ENCODE measurements at regions of chr6 and their contacts with region 1.

Region 1: GRCh38 chr6:146543211-146543939 is at the start of gene RAB32:
- DNase-seq: peak; percentile 96
- H3K4me3 ChIP-seq: peak within 1 kb of the TSS; percentile 65 to 98 (median 89)
- H3K27ac ChIP-seq: peak within 1 kb of the TSS; percentile 94 to 100 (median 98)
- H3K4me1 ChIP-seq: peaks cover 19 to 46% (median 37%) of the 10 kb centered on the region in 4 donors
- H3K27me3 ChIP-seq: no peaks in the 10 kb centered on the region
- CTCF ChIP-seq: peak; percentile 69 to 90 (median 81)
- EP300 ChIP-seq: no peak
- POLR2A ChIP-seq: peak; percentile 50
- total RNA-seq, gene RAB32: 36.5 to 61.0 (median 45.9) TPM

Region 2: DNA sequence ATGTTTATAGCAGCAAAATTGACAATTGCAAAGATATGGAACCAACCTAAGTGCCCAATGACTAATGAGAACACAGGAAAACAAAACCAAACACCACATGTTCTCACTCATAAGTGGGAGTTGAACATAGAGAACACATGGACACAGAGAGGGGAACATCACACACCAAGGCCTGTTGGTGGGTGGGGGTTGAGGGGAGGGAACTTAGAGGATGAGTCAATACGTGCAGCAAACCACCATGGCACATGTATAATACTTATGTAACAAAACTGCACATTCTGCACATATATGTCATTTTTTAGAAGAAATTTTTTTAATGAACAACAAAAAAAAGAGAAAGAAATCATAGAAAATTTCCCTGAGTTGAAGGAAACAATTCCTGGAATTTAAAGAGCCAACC is 811.9 kb before region 1 on chr6:
- intact Hi-C with region 1: no loop called
- DNase-seq: no peak
- H3K4me3 ChIP-seq: no peak overlapping the region
- H3K27ac ChIP-seq: peak overlapping the region in 1 of 4 donors; percentile 11
- H3K4me1 ChIP-seq: peaks cover 11 to 36% (median 29%) of the 10 kb centered on the region in 4 donors
- H3K27me3 ChIP-seq: no peaks in the 10 kb centered on the region
- CTCF ChIP-seq: no peak
- EP300 ChIP-seq: no peak
- POLR2A ChIP-seq: no peak

Region 3: GRCh38 chr6:145963216-145964068 is 579.9 kb before region 1 on chr6:
- intact Hi-C with region 1: loop called (anchors 5 kb)
- DNase-seq: peak; percentile 91
- H3K4me3 ChIP-seq: peak overlapping the region; percentile 70 to 83 (median 77)
- H3K27ac ChIP-seq: peak overlapping the region; percentile 85 to 92 (median 90)
- H3K4me1 ChIP-seq: peaks cover 30 to 53% (median 40%) of the 10 kb centered on the region in 4 donors
- H3K27me3 ChIP-seq: no peaks in the 10 kb centered on the region
- CTCF ChIP-seq: no peak
- EP300 ChIP-seq: no peak
- POLR2A ChIP-seq: no peak

Region 4: GRCh38 chr6:146598772-146599405 is 55.5 kb after region 1 on chr6 and contains the start of gene ADGB:
- intact Hi-C with region 1: no loop called
- DNase-seq: no peak
- H3K4me3 ChIP-seq: peak within 1 kb of the TSS; percentile 43 to 57 (median 46)
- H3K27ac ChIP-seq: no peak within 1 kb of the TSS
- H3K4me1 ChIP-seq: peaks cover 5 to 14% (median 8%) of the 10 kb centered on the region in 4 donors
- H3K27me3 ChIP-seq: no peaks in the 10 kb centered on the region
- CTCF ChIP-seq: no peak
- EP300 ChIP-seq: no peak
- POLR2A ChIP-seq: no peak
- total RNA-seq, gene ADGB: not detected

Region 5: DNA sequence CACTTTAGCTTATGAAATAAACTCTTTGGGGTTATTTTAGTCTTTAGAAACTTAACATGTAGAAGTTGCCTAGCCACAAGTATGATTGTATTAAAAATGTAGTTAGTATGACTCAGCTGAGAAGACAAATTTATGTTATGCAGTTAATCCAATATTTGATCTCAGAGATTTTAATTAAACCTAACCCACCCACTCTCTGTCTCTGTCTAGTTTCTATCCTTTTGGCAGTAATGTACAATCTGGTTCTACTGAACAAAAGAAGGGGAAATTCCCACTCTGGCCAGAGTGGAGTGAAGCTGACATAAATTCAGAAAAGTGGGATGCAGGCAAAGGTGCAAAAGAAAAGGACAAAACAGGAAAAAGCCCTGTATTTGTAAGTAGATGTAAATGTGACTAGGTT is 91.8 kb after region 1 on chr6:
- intact Hi-C with region 1: no loop called
- DNase-seq: no peak
- H3K4me3 ChIP-seq: no peak overlapping the region
- H3K27ac ChIP-seq: no peak overlapping the region
- H3K4me1 ChIP-seq: no peaks in the 10 kb centered on the region
- H3K27me3 ChIP-seq: no peaks in the 10 kb centered on the region
- CTCF ChIP-seq: no peak
- EP300 ChIP-seq: no peak
- POLR2A ChIP-seq: no peak

Region 6: DNA sequence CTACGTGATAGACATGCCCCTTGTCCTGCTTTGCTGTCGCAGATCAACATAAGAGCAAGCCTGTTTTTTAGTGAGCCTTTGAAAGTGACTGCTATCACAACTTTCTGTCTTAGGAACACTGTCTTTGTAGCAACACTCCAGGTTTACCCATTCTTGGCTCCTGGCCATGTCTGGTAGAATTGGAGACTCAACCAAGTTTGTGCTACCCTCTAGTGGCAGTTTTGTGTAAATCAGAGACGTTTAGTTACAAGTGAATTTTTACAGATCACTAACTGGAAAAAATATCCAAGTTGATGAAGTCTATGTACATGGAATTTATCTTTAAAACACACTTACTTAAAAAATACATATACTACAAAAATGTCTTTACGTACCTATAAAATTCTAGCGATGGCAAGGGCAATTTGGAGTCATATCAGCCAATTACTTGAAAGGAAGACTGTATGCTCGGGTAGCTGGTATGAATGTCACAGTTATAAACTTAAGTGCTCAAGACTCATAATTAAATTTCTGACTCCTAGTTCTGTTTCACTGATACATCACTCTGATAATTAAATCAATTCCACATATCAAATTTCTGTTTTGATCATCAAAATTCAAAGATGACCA is 156.8 kb after region 1 on chr6:
- intact Hi-C with region 1: loop called (anchors 2 kb)
- DNase-seq: no peak
- H3K4me3 ChIP-seq: no peak overlapping the region
- H3K27ac ChIP-seq: no peak overlapping the region
- H3K4me1 ChIP-seq: peaks cover 0 to 4% (median 0%) of the 10 kb centered on the region in 4 donors
- H3K27me3 ChIP-seq: no peaks in the 10 kb centered on the region
- CTCF ChIP-seq: peak; percentile 68 to 77 (median 70)
- EP300 ChIP-seq: no peak
- POLR2A ChIP-seq: no peak

Region 7: DNA sequence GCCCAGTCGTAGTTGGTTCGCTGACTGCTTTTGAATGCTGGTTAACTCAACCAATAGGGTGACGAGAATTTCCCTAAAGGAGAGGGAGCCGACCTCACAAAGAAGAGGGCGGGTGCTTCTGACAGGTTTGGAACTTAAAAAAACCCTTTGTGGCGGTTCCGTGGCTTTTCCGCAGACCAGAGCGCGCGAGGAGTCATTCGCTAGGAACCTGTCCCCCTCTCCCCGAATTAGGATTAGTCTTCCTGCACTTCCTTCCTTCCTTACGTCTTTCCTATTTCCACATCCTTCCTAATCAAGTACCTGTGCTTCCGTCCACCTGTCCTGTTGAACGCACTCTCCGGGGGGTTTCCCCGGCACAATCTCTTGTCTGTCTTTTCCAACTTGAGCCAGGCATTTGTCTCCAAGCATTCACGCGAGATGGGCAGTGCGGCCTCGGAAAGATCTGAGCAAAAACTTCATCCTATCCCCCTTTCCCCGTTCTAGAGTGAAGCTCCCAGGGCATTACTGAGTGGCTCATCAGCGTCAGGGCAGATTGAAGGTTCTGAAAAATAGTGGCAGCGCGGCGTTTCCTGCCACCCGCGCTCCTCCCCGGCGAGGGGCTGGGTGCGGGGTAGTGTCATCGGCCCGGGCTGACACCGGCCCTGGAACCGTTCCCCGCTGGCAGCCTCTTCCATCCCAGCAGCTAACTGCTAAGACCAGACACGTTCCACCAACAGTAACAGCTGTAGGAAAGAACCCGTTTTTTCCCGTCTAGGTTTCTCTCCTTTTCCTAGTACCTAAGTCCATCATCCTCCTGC is 659.3 kb after region 1 on chr6:
- intact Hi-C with region 1: loop called (anchors 10 kb)
- DNase-seq: peak; percentile 94
- H3K4me3 ChIP-seq: peak overlapping the region; percentile 83 to 97 (median 88)
- H3K27ac ChIP-seq: peak overlapping the region; percentile 94 to 98 (median 95)
- H3K4me1 ChIP-seq: peaks cover 0 to 33% (median 24%) of the 10 kb centered on the region in 4 donors
- H3K27me3 ChIP-seq: no peaks in the 10 kb centered on the region
- CTCF ChIP-seq: no peak
- EP300 ChIP-seq: no peak
- POLR2A ChIP-seq: no peak

Measured in esophagus muscularis mucosa (tissue), 4 donors.